Caco-2 (cell line): ENCODE measurements at regions of chr1 and their contacts with region 1.

Region 1: DNA sequence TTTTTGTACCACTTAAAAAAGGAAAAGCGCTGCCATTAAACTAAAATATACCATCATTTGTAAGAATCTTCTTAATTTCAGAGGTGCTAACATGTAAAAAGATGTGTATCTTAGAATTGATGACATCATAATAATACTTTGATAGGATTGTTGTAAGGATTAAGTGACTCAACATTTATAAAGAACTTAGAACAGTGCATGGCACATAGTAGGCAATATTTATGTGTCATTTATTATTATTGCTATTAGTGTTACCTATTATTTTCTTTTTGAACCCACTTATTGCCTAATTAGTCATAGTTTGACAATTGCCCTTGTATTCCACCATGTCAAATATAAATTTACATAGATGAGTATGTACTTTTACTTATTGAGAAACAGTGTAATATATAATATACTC is 21.8 kb downstream of the HIPK1 start:
- DNase-seq: no peak
- H3K4me3 ChIP-seq: no peak overlapping the region
- H3K4me3 Mint-ChIP-seq: no peak overlapping the region
- H3K27ac Mint-ChIP-seq: no peak overlapping the region
- H3K4me1 ChIP-seq: peaks cover 20% of the 10 kb centered on the region
- H3K4me1 Mint-ChIP-seq: peaks cover 15% of the 10 kb centered on the region
- H3K27me3 ChIP-seq: no peaks in the 10 kb centered on the region
- H3K27me3 Mint-ChIP-seq: no peaks in the 10 kb centered on the region
- CTCF ChIP-seq: no peak

Region 2: DNA sequence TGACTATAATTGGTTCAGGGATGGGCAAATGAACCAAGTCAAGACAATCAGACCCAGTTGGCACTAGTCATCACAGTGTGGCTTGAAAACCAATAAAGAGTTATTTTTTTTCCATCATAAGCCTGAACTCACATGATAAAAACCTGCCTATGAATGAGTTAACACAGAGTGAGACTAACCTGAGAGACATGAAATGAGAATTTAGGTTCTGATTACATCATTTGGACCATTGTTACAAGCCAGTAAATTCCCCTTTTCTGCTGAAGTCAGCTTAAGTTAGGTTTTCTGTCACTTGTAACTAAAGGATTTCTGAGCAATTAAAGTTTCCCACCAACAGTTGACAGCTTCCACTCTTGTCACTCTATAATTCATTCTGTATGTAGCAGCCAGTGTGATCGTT is 129.0 kb before region 1 on chr1:
- CTCF ChIA-PET with region 1: no interaction called
- POLR2A ChIA-PET with region 1: no interaction called
- intact Hi-C with region 1: no loop called
- DNase-seq: no peak
- H3K4me3 ChIP-seq: no peak overlapping the region
- H3K4me3 Mint-ChIP-seq: no peak overlapping the region
- H3K27ac Mint-ChIP-seq: no peak overlapping the region
- H3K4me1 ChIP-seq: no peaks in the 10 kb centered on the region
- H3K4me1 Mint-ChIP-seq: no peaks in the 10 kb centered on the region
- H3K27me3 ChIP-seq: no peaks in the 10 kb centered on the region
- H3K27me3 Mint-ChIP-seq: no peaks in the 10 kb centered on the region
- CTCF ChIP-seq: no peak

Region 3: GRCh38 chr1:113984710-113985109 is 33.8 kb after region 1 on chr1:
- CTCF ChIA-PET with region 1: no interaction called
- POLR2A ChIA-PET with region 1: no interaction called
- intact Hi-C with region 1: no loop called
- DNase-seq: no peak
- H3K4me3 ChIP-seq: no peak overlapping the region
- H3K4me3 Mint-ChIP-seq: no peak overlapping the region
- H3K27ac Mint-ChIP-seq: no peak overlapping the region
- H3K4me1 ChIP-seq: peaks cover 3% of the 10 kb centered on the region
- H3K4me1 Mint-ChIP-seq: no peaks in the 10 kb centered on the region
- H3K27me3 ChIP-seq: no peaks in the 10 kb centered on the region
- H3K27me3 Mint-ChIP-seq: no peaks in the 10 kb centered on the region
- CTCF ChIP-seq: no peak

Region 4: GRCh38 chr1:114015075-114015685 is 64.2 kb after region 1 on chr1:
- CTCF ChIA-PET with region 1: no interaction called
- POLR2A ChIA-PET with region 1: no interaction called
- intact Hi-C with region 1: no loop called
- DNase-seq: no peak
- H3K4me3 ChIP-seq: no peak overlapping the region
- H3K4me3 Mint-ChIP-seq: no peak overlapping the region
- H3K27ac Mint-ChIP-seq: no peak overlapping the region
- H3K4me1 ChIP-seq: peaks cover under 1% of the 10 kb centered on the region; the same call in 1 of the 2 replicates
- H3K4me1 Mint-ChIP-seq: peaks cover 6% of the 10 kb centered on the region
- H3K27me3 ChIP-seq: no peaks in the 10 kb centered on the region
- H3K27me3 Mint-ChIP-seq: no peaks in the 10 kb centered on the region
- CTCF ChIP-seq: no peak

Region 5: GRCh38 chr1:114062477-114063099 is 111.6 kb after region 1 on chr1:
- CTCF ChIA-PET with region 1: no interaction called
- POLR2A ChIA-PET with region 1: no interaction called
- intact Hi-C with region 1: no loop called
- DNase-seq: no peak
- H3K4me3 ChIP-seq: no peak overlapping the region
- H3K4me3 Mint-ChIP-seq: no peak overlapping the region
- H3K27ac Mint-ChIP-seq: no peak overlapping the region
- H3K4me1 ChIP-seq: no peaks in the 10 kb centered on the region
- H3K4me1 Mint-ChIP-seq: no peaks in the 10 kb centered on the region
- H3K27me3 ChIP-seq: no peaks in the 10 kb centered on the region
- H3K27me3 Mint-ChIP-seq: no peaks in the 10 kb centered on the region
- CTCF ChIP-seq: no peak

Region 6: DNA sequence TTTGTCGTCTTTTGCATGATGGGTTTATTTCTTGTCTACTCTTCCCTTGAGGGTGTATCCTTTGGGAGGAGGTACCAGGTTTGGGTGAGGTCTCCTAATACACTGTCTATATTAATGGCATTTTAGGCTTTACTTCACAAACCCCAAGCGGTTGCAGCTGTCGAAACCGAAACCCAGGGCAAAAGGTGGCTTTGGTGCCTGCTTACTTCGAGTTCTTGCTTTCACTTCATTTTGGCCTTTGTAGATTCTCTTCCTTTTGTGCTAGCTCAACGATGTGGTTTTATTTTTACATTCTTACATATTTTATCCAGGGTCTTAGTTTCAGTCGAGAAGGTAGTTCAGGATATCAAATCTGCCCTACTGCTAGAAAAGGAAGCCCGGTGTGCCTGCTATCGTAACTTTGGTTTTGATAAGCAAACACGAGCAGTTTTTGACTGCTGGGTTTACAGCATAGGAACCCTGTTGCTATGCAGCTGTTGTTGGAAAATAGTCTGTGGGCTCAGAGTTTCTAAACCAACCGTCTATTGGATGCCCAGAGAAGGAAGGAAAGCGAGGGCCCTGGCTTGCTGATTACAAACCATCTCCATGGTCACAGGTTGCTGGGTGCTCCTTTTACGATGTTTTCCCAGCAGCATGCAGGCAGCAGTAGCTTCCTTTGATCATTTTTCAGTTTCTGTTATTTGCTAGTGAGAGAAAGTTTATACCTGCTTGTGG is 1148.2 kb after region 1 on chr1:
- CTCF ChIA-PET with region 1: no interaction called
- POLR2A ChIA-PET with region 1: interaction called, 20 read pairs
- intact Hi-C with region 1: no loop called
- DNase-seq: peak in 1 of 2 experiments; percentile 59
- H3K4me3 ChIP-seq: no peak overlapping the region
- H3K4me3 Mint-ChIP-seq: peak overlapping the region; percentile 48
- H3K27ac Mint-ChIP-seq: peak overlapping the region; percentile 84
- H3K4me1 ChIP-seq: no peaks in the 10 kb centered on the region
- H3K4me1 Mint-ChIP-seq: peaks cover 8% of the 10 kb centered on the region
- H3K27me3 ChIP-seq: no peaks in the 10 kb centered on the region
- H3K27me3 Mint-ChIP-seq: no peaks in the 10 kb centered on the region
- CTCF ChIP-seq: no peak